CD4-positive, alpha-beta memory T cell (primary cell): ENCODE measurements at regions of chr10 and their contacts with region 1.

Region 1: DNA sequence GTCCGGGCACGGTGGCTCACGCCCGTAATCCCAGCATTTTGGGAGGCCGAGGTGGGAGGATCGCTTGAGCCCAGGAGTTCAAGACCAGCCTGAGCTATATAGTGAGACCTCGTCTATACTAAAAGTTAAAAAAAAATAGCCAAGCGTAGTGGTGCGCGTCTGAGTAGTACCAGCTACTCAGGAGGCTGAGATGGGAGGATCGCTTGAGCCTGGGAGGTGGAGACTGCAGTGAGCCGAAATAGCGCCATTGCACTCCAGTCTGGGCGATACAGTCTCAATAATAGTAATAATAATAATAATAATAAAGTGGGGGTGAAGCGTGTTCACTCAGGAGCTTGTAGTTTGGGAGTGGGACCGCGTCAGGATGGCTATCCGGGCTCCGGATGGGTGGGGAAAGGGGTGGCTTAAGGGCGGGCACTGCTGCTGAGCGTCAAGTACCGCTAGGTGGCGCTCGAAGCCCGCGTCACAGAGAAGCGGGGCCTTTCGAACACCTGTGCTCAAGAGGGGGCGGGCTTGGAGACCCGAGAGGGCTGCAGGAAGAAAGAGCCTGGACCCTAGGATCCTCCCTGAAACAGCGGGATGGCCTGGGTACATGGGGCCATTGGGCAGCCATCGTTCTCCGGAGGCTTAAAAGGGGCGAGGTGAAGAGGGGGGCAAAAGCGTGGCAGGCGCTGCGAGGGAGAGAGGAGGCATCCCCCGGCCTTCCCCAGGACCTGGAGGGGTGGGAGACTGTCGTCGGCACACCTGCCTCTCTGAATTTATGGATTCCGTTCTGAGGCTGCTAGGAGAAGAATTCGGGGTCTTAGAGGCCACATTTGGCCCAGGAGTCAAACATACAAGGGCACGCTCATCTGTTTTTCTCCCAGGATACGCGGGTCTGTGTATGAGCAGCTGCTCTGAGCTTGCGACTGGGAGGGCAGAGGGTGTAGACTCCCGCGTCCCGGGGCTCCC is 14.5 kb downstream of the LBX1 start:
- DNase-seq: peak; percentile 63 to 75 (median 70)
- H3K4me3 ChIP-seq: peak overlapping the region in 1 of 2 donors; percentile 2
- H3K4me3 Mint-ChIP-seq: peak overlapping the region; percentile 37 to 86 (median 73)
- H3K27ac ChIP-seq: no peak overlapping the region
- H3K27ac Mint-ChIP-seq: peak overlapping the region in 3 of 7 donors; percentile 29 to 82 (median 39)
- H3K4me1 ChIP-seq: peaks cover 52% of the 10 kb centered on the region
- H3K4me1 Mint-ChIP-seq: peaks cover 16 to 49% (median 35%) of the 10 kb centered on the region in 4 donors
- H3K27me3 ChIP-seq: peaks cover 54% of the 10 kb centered on the region
- H3K27me3 Mint-ChIP-seq: peaks cover 39 to 64% of the 10 kb centered on the region in 2 donors

Region 2: DNA sequence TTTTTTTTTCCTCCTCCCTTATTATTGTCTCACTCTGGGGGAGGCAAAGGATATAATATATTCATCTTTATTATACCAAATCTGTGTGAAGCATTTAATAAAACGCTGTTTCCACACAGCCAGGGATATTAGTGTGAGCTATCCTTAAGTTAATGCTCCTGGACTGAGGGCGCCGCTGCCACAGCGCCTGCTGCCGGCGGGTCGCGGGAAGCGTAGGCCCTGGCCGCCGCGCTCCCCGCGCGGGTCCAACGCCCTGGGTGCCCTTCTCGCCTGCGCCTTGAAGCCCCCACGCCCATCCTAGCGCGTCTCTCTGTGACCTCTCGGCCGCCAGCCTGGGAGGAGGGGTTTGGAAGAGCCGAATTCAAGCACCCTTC is 24.0 kb after region 1 on chr10:
- CTCF ChIA-PET with region 1: interaction called, 45 read pairs
- POLR2A ChIA-PET with region 1: no interaction called
- intact Hi-C with region 1: loop called (anchors 1 kb)
- DNase-seq: no peak
- H3K4me3 ChIP-seq: no peak overlapping the region
- H3K4me3 Mint-ChIP-seq: no peak overlapping the region
- H3K27ac ChIP-seq: no peak overlapping the region
- H3K27ac Mint-ChIP-seq: no peak overlapping the region
- H3K4me1 ChIP-seq: peaks cover 24% of the 10 kb centered on the region
- H3K4me1 Mint-ChIP-seq: peaks cover 7 to 24% (median 16%) of the 10 kb centered on the region in 4 donors
- H3K27me3 ChIP-seq: peaks cover 65% of the 10 kb centered on the region
- H3K27me3 Mint-ChIP-seq: peaks cover 50 to 60% of the 10 kb centered on the region in 2 donors

Region 3: DNA sequence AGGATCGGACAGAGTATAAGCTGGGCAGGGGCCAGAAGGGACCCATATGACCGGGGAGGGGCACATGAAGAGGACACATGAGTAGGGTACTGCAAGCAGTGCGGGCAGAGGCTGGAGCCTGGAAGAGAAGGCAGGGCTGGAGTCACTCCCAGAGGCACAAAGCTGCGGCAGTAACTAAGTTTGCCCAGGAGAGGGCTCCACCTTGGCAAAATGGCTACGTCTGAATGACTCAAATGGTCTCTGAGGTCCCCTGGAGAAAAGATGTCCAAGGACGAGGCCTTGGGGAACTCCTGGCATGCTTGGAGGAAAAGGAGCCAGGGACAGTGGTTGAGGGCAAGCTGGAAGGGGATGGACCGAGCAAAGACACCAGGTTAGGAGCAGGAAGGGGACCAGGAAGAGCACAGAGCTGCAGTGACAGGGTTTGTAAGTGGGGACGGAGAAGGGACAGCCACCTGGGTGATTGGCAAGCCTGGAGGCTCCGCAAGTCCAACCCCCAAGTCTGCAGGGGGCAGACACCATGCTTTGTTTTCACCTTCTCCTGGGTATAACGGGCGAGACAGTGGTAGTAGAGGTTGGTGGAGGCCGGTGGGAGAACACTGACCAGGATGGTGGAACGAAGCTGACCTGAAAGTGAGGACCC is 57.6 kb after region 1 on chr10:
- CTCF ChIA-PET with region 1: interaction called, 8 read pairs
- POLR2A ChIA-PET with region 1: no interaction called
- intact Hi-C with region 1: loop called (anchors 1 kb)
- DNase-seq: peak in 4 of 5 donors; percentile 38 to 50 (median 45)
- H3K4me3 ChIP-seq: no peak overlapping the region
- H3K4me3 Mint-ChIP-seq: no peak overlapping the region
- H3K27ac ChIP-seq: no peak overlapping the region
- H3K27ac Mint-ChIP-seq: no peak overlapping the region
- H3K4me1 ChIP-seq: no peaks in the 10 kb centered on the region
- H3K4me1 Mint-ChIP-seq: peaks cover 0 to 7% (median under 1%) of the 10 kb centered on the region in 4 donors
- H3K27me3 ChIP-seq: no peaks in the 10 kb centered on the region
- H3K27me3 Mint-ChIP-seq: peaks cover 16 to 26% of the 10 kb centered on the region in 2 donors

Region 4: GRCh38 chr10:101441541-101442455 is 227.1 kb after region 1 on chr10:
- CTCF ChIA-PET with region 1: interaction called, 30 read pairs
- POLR2A ChIA-PET with region 1: no interaction called
- intact Hi-C with region 1: loop called (anchors 2 kb)
- DNase-seq: peak; percentile 18 to 48 (median 31)
- H3K4me3 ChIP-seq: no peak overlapping the region
- H3K4me3 Mint-ChIP-seq: no peak overlapping the region
- H3K27ac ChIP-seq: no peak overlapping the region
- H3K27ac Mint-ChIP-seq: peak overlapping the region in 2 of 7 donors; percentile 5 to 19
- H3K4me1 ChIP-seq: no peaks in the 10 kb centered on the region
- H3K4me1 Mint-ChIP-seq: peaks cover 0 to 5% (median 4%) of the 10 kb centered on the region in 4 donors
- H3K27me3 ChIP-seq: no peaks in the 10 kb centered on the region
- H3K27me3 Mint-ChIP-seq: no peaks in the 10 kb centered on the region

Region 5: DNA sequence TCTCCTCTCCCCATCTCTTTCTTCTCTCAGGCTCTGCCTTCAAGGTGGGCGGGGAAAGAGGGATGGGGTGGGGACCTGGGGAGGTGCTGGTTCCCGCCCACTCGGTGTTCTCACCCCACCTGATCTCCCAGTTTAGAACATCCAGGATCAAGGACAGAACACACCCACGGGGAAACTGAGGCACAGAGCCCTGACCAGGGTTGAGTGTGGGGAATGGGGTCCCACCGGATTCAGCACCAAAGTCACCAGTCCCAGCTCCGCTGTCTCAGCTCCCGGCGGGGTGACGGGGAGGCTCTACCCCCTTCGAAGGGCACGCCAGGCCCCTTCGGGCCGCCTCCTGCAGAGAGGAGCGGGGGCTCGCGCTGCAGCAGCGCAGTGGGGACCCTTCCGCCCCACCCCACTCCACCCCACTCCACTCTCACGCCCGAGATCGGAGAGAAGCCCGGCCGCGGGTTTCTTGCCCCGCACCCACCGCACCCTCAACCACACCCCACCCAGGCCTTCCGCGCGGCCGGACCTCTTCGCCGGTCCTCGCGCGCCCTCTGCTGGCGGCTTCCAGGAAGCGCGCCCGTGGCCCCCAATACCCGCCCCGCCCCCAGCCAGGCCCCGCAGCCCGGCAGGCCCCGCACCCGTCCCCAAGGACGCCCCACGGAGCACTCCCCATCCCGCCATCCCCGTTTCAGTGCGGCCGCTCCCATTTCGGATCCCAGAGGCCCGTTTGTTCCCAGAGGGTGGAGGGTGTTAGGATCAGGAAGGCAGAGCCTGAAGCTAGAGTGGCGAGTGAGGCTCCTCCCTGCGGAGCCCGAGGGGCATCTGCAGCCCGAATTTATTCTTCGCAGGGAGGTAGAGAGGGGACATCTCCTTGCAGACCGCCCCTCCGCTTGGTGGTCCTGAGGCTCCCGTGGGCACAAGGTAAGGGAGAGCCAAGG is 355.4 kb after region 1 on chr10:
- CTCF ChIA-PET with region 1: interaction called, 52 read pairs
- POLR2A ChIA-PET with region 1: no interaction called
- intact Hi-C with region 1: no loop called
- DNase-seq: peak; percentile 74 to 83 (median 76)
- H3K4me3 ChIP-seq: peak overlapping the region; percentile 23 to 68
- H3K4me3 Mint-ChIP-seq: peak overlapping the region; percentile 38 to 76 (median 67)
- H3K27ac ChIP-seq: no peak overlapping the region
- H3K27ac Mint-ChIP-seq: peak overlapping the region in 2 of 7 donors; percentile 17 to 42
- H3K4me1 ChIP-seq: peaks cover 21% of the 10 kb centered on the region
- H3K4me1 Mint-ChIP-seq: peaks cover 6 to 28% (median 9%) of the 10 kb centered on the region in 4 donors
- H3K27me3 ChIP-seq: peaks cover 13% of the 10 kb centered on the region
- H3K27me3 Mint-ChIP-seq: peaks cover 25 to 42% of the 10 kb centered on the region in 2 donors